Left cardiac atrium (tissue), 4 donors: ENCODE measurements at regions of chr9 and their contacts with region 1.

Region 1: GRCh38 chr9:71604197-71605063 is 163.9 kb downstream of the CEMIP2 start:
- DNase-seq: peak; percentile 76
- ATAC-seq: peak in 1 of 2 donors; percentile 75

Region 2: GRCh38 chr9:71768388-71769174 is 164.2 kb after region 1 on chr9 and contains the start of gene CEMIP2:
- intact Hi-C with region 1: loop called in 1 of 2 experiments (anchors 5 kb)
- DNase-seq: peak; percentile 92
- ATAC-seq: peak; percentile 93
- total RNA-seq, gene CEMIP2: 12.0 to 31.9 TPM

Region 3: DNA sequence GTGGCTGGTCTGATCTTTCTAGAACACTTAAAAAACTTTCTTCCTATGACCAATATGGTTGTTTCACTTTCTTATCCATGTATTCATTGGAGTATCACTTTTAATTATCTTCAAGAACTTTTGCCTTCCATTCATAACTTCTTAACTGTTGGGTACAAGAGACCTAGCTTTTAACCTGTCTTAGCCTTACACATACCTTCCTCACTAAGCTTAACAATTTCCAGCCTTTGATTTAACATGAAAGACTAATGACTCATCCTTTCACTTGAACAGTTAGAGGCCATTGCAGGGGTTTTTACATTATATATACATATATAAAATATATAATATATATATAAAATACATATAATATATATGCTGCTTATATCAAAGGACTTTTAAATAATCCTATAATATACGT is 248.7 kb after region 1 on chr9:
- intact Hi-C with region 1: no loop called
- DNase-seq: no peak
- ATAC-seq: no peak